ENCODE measurements at regions of chr17 and their contacts with region 1.

Region 1: DNA sequence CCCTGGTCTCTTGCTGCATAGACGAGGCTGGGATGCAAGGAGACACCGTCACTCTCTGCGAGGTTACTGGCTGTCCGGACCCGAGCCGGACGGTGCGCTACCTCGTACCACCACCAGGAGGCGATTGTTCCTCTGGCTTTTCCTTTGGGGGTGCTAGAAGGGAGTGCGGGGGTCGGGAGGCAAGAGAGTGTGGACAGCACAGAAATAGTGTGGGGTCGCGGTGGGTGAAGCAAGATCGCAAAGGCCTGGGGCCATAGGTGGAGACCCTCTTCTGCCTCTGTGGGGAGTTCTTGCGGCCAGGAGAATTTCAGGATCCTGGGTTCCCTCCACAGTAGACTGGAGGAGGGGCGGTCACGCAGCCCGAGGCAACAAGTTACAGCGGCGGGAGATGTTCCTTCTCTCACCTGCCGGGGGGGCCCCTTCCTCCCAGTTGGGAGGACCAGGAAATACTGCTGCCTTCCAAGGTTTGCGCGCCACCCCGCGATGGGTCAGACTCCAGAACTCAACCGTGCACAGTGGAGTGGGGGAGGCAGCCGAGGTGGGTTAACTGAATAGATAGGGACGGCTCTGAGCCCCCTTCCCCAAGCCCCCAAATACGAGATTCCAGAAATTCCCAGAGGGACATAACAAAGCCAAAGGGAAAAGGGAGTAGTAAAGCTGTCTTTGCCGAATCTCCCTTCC is 6.9 kb downstream of the PHOSPHO1 start:
- DNase-seq: peak; percentile 72
- ATAC-seq: peak; percentile 28
- H3K4me3 ChIP-seq: peak overlapping the region in 4 of 5 experiments; percentile 31 to 56 (median 42)
- H3K4me3 Mint-ChIP-seq: peak overlapping the region; percentile 87
- H3K27ac ChIP-seq: no peak overlapping the region
- H3K27ac Mint-ChIP-seq: peak overlapping the region; percentile 62
- H3K4me1 ChIP-seq: peaks cover 50 to 58% of the 10 kb centered on the region in 2 donors
- H3K4me1 Mint-ChIP-seq: peaks cover 49% of the 10 kb centered on the region
- H3K27me3 ChIP-seq: peaks cover 0 to 16% (median 7%) of the 10 kb centered on the region in 4 experiments
- H3K27me3 Mint-ChIP-seq: peaks cover 4% of the 10 kb centered on the region
- CTCF ChIP-seq: peak; percentile 90

Region 2: DNA sequence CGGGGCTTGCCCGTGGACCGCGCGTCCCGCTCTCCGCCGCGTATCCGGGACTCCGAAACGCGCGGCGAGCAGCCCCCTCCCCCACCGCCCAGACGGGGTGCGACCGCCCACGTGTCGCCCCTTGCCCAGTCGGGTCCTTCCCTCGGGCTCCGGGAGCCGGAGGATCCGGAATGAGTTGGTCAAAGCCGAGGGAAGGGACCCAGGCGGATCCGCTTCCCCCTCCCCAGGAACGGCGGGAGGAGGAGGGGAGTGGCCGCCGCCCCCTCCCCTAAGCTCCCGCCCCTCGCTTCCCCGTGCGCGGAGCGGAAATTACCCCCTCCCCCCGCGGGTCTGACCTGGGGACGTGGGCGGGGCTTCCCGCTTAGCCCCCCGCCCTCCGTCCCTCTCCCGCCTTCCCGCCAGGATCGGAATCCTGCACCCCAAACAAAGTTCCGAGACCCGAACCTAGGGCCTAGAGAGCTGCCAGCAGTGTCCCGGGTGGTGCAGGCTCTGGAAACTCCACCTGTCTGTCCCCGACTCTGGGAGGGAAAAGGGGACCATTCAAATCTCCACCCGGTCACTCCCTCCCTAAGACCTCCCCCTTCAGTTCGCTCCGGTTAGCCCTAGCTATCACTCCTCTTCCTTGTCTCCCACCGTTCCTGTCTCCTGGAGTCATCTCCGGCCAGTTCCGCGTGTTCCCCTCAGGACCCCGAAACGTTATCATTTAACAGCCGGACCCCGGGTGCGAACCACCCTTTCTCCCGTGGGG is 227.5 kb before region 1 on chr17:
- CTCF ChIA-PET with region 1: no interaction called
- POLR2A ChIA-PET with region 1: no interaction called
- intact Hi-C with region 1: no loop called
- DNase-seq: peak; percentile 63
- ATAC-seq: peak; percentile 28
- H3K4me3 ChIP-seq: peak overlapping the region in 4 of 5 experiments; percentile 14 to 62 (median 42)
- H3K4me3 Mint-ChIP-seq: peak overlapping the region; percentile 84
- H3K27ac ChIP-seq: no peak overlapping the region
- H3K27ac Mint-ChIP-seq: peak overlapping the region; percentile 70
- H3K4me1 ChIP-seq: peaks cover 38 to 40% of the 10 kb centered on the region in 2 donors
- H3K4me1 Mint-ChIP-seq: peaks cover 33% of the 10 kb centered on the region
- H3K27me3 ChIP-seq: peaks cover 2 to 73% (median 66%) of the 10 kb centered on the region in 4 experiments
- H3K27me3 Mint-ChIP-seq: peaks cover 83% of the 10 kb centered on the region
- CTCF ChIP-seq: no peak

Region 3: DNA sequence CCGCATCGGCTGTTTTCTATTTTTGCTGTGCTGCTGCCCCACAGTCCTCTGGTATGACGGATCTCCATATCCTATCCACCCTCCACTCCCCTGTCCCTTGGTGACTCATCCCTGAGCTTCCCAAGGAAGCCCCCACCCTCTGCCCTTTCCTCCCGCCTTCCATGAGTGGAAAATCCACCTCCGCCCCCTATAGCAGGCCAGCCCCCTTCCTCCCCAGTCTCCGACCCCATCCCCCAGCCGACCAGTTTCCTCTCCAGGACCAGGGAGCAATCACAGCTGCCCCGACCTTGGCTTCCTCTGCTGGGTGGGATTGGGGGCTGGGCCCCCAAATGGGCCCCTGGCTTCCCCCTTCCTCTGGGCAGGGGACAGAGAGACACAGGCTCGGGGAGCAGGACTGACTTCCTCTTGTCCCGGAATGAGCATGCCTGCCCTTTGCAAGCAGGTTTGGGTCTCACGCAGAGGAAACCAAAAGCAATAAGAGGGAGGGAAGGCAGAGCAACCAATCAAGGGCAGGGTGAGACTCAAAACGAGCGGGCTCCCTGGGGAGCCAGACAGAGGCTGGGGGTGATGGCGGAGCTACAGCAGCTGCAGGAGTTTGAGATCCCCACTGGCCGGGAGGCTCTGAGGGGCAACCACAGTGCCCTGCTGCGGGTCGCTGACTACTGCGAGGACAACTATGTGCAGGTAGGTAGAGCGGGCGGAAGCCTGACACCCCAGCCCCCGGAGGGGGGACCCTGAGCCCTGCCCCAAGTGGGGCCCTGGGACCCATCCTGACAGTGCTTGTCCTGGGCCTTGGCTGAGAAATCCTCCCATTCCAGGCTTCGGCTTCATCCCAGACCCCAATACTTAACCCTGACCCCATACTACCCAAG is 13.3 kb before region 1 on chr17 and contains the starts of genes ABI3 and GNGT2:
- CTCF ChIA-PET with region 1: interaction called, 140 read pairs
- POLR2A ChIA-PET with region 1: interaction called, 3 read pairs
- intact Hi-C with region 1: loop called (anchors 1 kb)
- DNase-seq: peak; percentile 86
- ATAC-seq: peak; percentile 92
- H3K4me3 ChIP-seq: peak within 1 kb of the TSS; percentile 31 to 68 (median 60)
- H3K4me3 Mint-ChIP-seq: peak within 1 kb of the TSS; percentile 85
- H3K27ac ChIP-seq: peak within 1 kb of the TSS; percentile 51 to 82
- H3K27ac Mint-ChIP-seq: peak within 1 kb of the TSS; percentile 89
- H3K4me1 ChIP-seq: peaks cover 61 to 71% of the 10 kb centered on the region in 2 donors
- H3K4me1 Mint-ChIP-seq: peaks cover 61% of the 10 kb centered on the region
- H3K27me3 ChIP-seq: no peaks in the 10 kb centered on the region
- H3K27me3 Mint-ChIP-seq: no peaks in the 10 kb centered on the region
- CTCF ChIP-seq: no peak
- total RNA-seq, gene ABI3: 20.7 and 23.3 TPM in 2 replicates
- total RNA-seq, gene GNGT2: 9.3 and 11.1 TPM in 2 replicates

Region 4: GRCh38 chr17:49370971-49371834 is 147.5 kb after region 1 on chr17:
- CTCF ChIA-PET with region 1: no interaction called
- POLR2A ChIA-PET with region 1: no interaction called
- intact Hi-C with region 1: no loop called
- DNase-seq: no peak
- ATAC-seq: no peak
- H3K4me3 ChIP-seq: no peak overlapping the region
- H3K4me3 Mint-ChIP-seq: no peak overlapping the region
- H3K27ac ChIP-seq: peak overlapping the region; percentile 2 to 52
- H3K27ac Mint-ChIP-seq: peak overlapping the region; percentile 32
- H3K4me1 ChIP-seq: peaks cover 40 to 41% of the 10 kb centered on the region in 2 donors
- H3K4me1 Mint-ChIP-seq: peaks cover 61% of the 10 kb centered on the region
- H3K27me3 ChIP-seq: no peaks in the 10 kb centered on the region
- H3K27me3 Mint-ChIP-seq: no peaks in the 10 kb centered on the region
- CTCF ChIP-seq: no peak